ENCODE measurements at regions of chr3 and their contacts with region 1.

Region 1: GRCh38 chr3:64267721-64268604 is 42.7 kb upstream of the PRICKLE2 start:
- DNase-seq: peak; percentile 51 to 77
- H3K4me3 ChIP-seq: peak overlapping the region; percentile 57 to 70 (median 68)
- H3K27ac ChIP-seq: no peak overlapping the region
- H3K4me1 ChIP-seq: peaks cover 0 to 18% (median 9%) of the 10 kb centered on the region in 4 experiments; a peak in 4 of 7 replicates
- H3K27me3 ChIP-seq: no peaks in the 10 kb centered on the region
- CTCF ChIP-seq: no peak
- EP300 ChIP-seq: no peak; a peak in 1 of 3 replicates
- POLR2A ChIP-seq: no peak
- RAD21 ChIP-seq: no peak

Region 2: DNA sequence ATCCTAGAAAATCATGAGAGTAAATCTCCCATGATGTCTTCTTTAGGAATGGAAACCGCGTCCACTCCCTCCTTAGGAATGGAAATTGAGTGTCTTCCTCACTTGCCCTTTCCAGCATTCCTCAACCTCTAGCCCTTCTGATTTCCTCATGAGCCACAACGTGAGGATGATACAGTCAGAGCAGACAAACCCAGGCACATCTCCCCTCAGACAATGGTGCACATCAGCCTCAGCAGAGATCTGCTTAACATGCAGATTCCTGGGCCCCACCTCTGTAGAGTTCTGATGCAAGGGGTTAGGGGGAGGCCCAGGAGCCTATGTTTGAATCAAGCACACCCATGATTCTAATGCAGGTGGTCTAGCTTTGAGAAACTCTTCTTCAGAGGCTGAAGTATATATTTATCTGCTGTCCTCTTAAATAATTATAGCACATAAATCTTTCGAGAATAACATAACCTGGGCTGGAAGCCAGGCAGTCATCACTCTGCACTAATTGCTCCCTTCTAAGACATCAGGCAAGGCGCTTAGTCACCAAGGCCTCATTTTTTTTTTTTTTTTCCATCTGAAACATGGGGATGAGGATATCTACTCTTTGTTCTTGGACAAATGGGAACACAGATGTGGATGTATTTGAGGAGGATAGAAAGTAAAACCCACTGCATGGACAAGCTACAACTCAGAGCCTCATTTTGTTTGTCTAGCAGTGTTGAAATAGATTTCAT is 124.4 kb before region 1 on chr3:
- CTCF ChIA-PET with region 1: no interaction called
- POLR2A ChIA-PET with region 1: no interaction called
- DNase-seq: no peak
- H3K4me3 ChIP-seq: no peak overlapping the region
- H3K27ac ChIP-seq: no peak overlapping the region
- H3K4me1 ChIP-seq: peaks cover 0 to 6% (median 0%) of the 10 kb centered on the region in 4 experiments; a peak in 2 of 7 replicates
- H3K27me3 ChIP-seq: no peaks in the 10 kb centered on the region
- CTCF ChIP-seq: no peak
- EP300 ChIP-seq: no peak
- POLR2A ChIP-seq: no peak
- RAD21 ChIP-seq: no peak

Region 3: DNA sequence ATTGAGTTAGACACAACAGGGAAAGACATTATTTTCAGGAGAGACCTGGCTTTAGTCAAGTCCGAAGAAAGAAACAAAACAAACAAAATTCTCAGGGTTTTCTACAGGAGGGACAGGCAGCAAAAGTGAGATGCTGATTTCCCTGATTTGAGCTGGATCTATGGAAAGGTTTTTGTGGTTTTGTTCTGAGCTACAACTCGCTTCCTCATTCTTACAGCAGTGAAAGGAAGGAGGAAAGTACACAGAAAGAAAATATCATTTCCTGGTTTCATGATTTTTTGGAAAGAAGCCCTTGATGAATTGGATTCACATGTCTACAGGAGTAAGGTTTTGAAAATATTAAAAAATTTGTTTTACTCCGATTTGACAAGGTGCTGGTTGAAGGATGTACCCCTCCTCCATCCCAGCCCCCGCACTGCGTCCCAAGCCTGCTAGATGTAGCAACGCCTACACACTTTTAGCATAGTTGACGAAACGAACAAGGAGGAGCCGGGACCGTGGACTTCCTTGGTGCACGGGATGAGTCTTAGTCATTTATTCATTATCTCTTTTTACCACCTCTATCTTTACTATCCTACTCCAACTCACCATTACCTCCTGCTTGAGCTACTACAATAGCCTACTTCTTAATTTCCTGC is 53.5 kb before region 1 on chr3:
- CTCF ChIA-PET with region 1: no interaction called
- POLR2A ChIA-PET with region 1: no interaction called
- DNase-seq: no peak
- H3K4me3 ChIP-seq: no peak overlapping the region
- H3K27ac ChIP-seq: no peak overlapping the region
- H3K4me1 ChIP-seq: peaks cover 11 to 26% (median 17%) of the 10 kb centered on the region in 4 experiments; a peak in 6 of 7 replicates
- H3K27me3 ChIP-seq: peaks cover 0 to 16% (median 5%) of the 10 kb centered on the region in 4 experiments; a peak in 4 of 7 replicates
- CTCF ChIP-seq: no peak
- EP300 ChIP-seq: no peak
- POLR2A ChIP-seq: no peak
- RAD21 ChIP-seq: no peak

Region 4: GRCh38 chr3:64244011-64244942 is 23.7 kb before region 1 on chr3:
- CTCF ChIA-PET with region 1: interaction called, 11 read pairs
- POLR2A ChIA-PET with region 1: no interaction called
- DNase-seq: no peak
- H3K4me3 ChIP-seq: no peak overlapping the region
- H3K27ac ChIP-seq: no peak overlapping the region
- H3K4me1 ChIP-seq: no peaks in the 10 kb centered on the region; a peak in 1 of 7 replicates
- H3K27me3 ChIP-seq: no peaks in the 10 kb centered on the region
- CTCF ChIP-seq: peak in 2 of 3 experiments; percentile 61 to 93; a peak in 3 of 4 replicates
- EP300 ChIP-seq: no peak
- POLR2A ChIP-seq: no peak
- RAD21 ChIP-seq: peak; percentile 38 to 51; a peak in 3 of 4 replicates

Region 5: GRCh38 chr3:64295594-64295993 is 27.6 kb after region 1 on chr3:
- CTCF ChIA-PET with region 1: no interaction called
- POLR2A ChIA-PET with region 1: no interaction called
- DNase-seq: no peak
- H3K4me3 ChIP-seq: no peak overlapping the region
- H3K27ac ChIP-seq: no peak overlapping the region
- H3K4me1 ChIP-seq: no peaks in the 10 kb centered on the region
- H3K27me3 ChIP-seq: no peaks in the 10 kb centered on the region
- CTCF ChIP-seq: no peak
- EP300 ChIP-seq: no peak
- POLR2A ChIP-seq: no peak
- RAD21 ChIP-seq: no peak

Region 6: GRCh38 chr3:64336488-64336887 is 68.5 kb after region 1 on chr3:
- CTCF ChIA-PET with region 1: no interaction called
- POLR2A ChIA-PET with region 1: no interaction called
- DNase-seq: no peak
- H3K4me3 ChIP-seq: no peak overlapping the region
- H3K27ac ChIP-seq: no peak overlapping the region
- H3K4me1 ChIP-seq: peaks cover 0 to 4% (median 1%) of the 10 kb centered on the region in 4 experiments; a peak in 2 of 7 replicates
- H3K27me3 ChIP-seq: no peaks in the 10 kb centered on the region
- CTCF ChIP-seq: no peak
- EP300 ChIP-seq: no peak
- POLR2A ChIP-seq: no peak
- RAD21 ChIP-seq: no peak

Measured in H1 (cell line).